Heart right ventricle (tissue), 16 donors: ENCODE measurements at regions of chr11 and their contacts with region 1.

Region 1: DNA sequence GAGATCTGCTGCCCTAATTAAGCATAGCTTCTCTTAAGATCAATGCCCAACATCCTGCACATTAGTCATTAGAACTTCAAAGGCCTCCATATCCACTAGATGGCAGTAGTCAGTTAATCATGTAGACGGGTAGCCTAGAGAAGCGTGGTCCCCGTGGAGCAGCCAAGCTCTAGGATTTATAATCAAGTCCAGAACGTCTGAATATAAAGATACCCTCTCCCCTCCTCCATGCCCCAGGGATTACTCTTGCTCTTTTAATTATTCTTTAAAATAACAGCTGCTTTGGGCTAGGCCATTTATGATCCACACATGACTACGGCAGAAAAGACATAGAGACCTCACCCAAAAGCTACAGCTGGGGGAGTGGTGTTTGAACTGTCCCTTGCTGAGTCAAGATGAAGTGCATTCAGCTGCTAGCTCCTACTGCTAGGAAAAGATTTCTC is 327.6 kb upstream of the PLET1 start:
- DNase-seq: peak; percentile 38 to 64
- ATAC-seq: peak; percentile 52 to 87 (median 82)
- H3K4me3 ChIP-seq: no peak overlapping the region
- H3K27ac ChIP-seq: no peak overlapping the region
- H3K4me1 ChIP-seq: peaks cover 0 to 11% (median 0%) of the 10 kb centered on the region in 9 donors
- H3K27me3 ChIP-seq: peaks cover 0 to 4% (median 0%) of the 10 kb centered on the region in 7 donors
- CTCF ChIP-seq: peak; percentile 54 to 84 (median 73)

Region 2: DNA sequence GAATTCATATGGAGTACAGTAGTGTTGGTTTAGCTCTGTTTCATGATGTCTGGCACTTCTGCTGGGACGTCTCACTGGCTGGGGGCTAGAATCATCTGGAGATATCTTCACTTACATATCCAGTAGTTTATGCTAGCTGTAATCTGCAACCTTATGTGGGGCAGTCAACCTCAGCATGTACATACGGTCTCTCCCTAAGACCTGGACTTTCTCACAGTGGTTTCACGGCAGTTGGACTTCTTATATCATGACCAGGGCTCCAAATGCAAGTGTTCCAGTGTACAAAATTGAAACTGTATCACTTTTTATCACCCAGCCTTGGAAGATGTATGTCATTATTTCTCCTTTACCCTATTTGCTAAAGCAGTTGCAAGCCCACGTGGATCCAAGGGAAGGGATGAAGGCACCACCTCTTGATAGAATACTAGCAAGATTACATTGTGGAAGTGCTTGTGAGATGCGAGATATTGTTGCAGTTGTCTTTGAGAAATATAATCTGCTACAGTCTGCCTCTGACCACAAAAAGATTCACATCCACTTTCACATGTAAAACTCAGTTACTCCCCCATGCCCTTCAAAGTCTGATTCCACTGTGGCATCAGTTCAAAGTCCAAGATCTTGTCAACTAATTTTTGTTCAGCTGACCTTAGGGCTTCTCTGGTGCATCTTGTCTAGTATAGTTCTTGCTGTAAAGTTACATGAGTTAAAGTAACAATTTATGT is 56.3 kb after region 1 on chr11:
- intact Hi-C with region 1: loop called in 1 of 10 experiments (anchors 10 kb)
- DNase-seq: no peak
- ATAC-seq: no peak
- H3K4me3 ChIP-seq: no peak overlapping the region
- H3K27ac ChIP-seq: no peak overlapping the region
- H3K4me1 ChIP-seq: peaks cover 0 to 1% (median 0%) of the 10 kb centered on the region in 9 donors
- H3K27me3 ChIP-seq: no peaks in the 10 kb centered on the region
- CTCF ChIP-seq: no peak

Region 3: DNA sequence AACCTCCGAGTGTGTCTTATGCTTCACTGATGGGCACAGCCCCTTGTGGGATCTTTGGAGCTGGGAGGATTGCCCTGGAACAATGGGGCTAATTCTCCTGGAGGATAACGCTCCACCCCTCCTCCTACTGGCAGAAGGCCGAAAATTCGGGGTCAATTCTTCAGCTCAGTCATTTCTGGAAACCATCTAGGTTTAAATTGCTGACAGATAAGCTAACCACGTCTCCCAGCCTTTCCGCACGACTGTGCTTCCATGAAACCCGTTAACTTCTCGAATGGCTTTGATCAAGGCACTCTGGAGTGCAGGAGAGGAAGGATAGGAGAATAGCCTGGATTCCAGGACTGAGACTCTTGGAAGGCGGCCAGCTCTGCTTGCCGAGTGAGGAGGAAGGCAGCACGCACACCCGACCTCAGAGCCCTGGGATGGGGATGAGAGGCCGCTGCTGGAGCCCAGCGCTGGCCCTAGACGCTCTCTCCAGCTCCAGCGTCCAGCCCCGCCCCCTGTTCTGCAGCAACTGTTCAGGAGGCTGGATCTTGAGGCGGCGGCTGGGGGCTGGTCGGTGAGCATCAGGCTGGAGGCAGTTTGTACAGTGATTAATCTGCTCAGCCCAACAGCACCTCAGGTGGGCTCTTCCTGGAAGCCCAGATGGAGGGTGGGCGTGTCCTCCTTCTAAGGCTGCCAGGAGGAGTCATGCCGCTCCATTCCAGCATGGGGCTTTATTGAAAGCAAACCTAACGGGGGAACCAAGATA is 196.2 kb after region 1 on chr11:
- intact Hi-C with region 1: loop called in 2 of 10 experiments (anchors 10 kb)
- DNase-seq: peak; percentile 67 to 68
- ATAC-seq: peak; percentile 61 to 88 (median 79)
- H3K4me3 ChIP-seq: peak overlapping the region in 8 of 10 donors; percentile 4 to 37 (median 22)
- H3K27ac ChIP-seq: peak overlapping the region; percentile 31 to 87 (median 70)
- H3K4me1 ChIP-seq: peaks cover 17 to 52% (median 45%) of the 10 kb centered on the region in 9 donors
- H3K27me3 ChIP-seq: peaks cover 0 to 5% (median 0%) of the 10 kb centered on the region in 7 donors
- CTCF ChIP-seq: peak in 1 of 9 donors; percentile 7

Region 4: DNA sequence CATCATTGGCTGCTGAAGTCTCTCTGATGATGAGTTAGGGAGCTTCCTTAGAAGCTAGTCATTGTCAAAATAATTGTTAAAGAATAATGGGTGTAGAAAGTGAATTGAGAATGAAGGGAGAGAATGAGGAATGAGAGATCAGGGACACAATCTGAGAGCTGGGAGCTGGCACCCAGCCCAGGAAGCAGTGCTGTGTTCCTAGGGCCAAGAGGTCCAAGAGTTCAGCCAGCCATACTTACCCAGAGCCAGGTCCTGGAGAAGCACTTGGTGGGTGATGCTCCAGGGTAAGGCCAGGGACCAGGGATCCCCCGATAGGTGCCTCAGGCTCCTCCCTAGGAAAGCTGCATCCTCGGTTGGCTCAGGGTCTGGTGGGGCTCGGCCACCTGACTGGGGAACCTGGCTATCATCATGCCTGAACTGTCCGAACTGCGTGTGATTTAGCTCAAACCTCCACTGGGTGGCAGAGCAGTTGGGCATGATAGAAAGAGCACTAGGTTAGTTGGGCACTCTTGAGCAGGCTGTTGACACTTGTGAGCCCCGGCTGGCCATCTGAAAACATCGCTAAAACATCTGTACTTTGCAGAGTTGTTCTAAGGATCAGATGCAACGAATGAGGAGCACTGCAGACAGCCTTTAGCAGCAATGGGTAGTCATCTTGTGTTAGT is 249.0 kb after region 1 on chr11:
- intact Hi-C with region 1: loop called in 1 of 10 experiments (anchors 10 kb)
- DNase-seq: peak; percentile 10 to 45
- ATAC-seq: peak; percentile 49 to 65 (median 63)
- H3K4me3 ChIP-seq: no peak overlapping the region
- H3K27ac ChIP-seq: peak overlapping the region in 1 of 10 donors; percentile 19
- H3K4me1 ChIP-seq: peaks cover 0 to 24% (median 10%) of the 10 kb centered on the region in 9 donors
- H3K27me3 ChIP-seq: no peaks in the 10 kb centered on the region
- CTCF ChIP-seq: peak in 7 of 9 donors; percentile 25 to 58 (median 43)

Region 5: GRCh38 chr11:113289431-113290187 is 701.3 kb after region 1 on chr11:
- intact Hi-C with region 1: loop called (anchors 1 to 5 kb)
- DNase-seq: peak; percentile 33 to 67
- ATAC-seq: peak; percentile 58 to 82 (median 74)
- H3K4me3 ChIP-seq: no peak overlapping the region
- H3K27ac ChIP-seq: no peak overlapping the region
- H3K4me1 ChIP-seq: peaks cover 0 to 19% (median 0%) of the 10 kb centered on the region in 9 donors
- H3K27me3 ChIP-seq: peaks cover 0 to 16% (median 0%) of the 10 kb centered on the region in 7 donors
- CTCF ChIP-seq: peak; percentile 80 to 95 (median 89)